ENCODE measurements at regions of chr3 and their contacts with region 1.

Region 1: DNA sequence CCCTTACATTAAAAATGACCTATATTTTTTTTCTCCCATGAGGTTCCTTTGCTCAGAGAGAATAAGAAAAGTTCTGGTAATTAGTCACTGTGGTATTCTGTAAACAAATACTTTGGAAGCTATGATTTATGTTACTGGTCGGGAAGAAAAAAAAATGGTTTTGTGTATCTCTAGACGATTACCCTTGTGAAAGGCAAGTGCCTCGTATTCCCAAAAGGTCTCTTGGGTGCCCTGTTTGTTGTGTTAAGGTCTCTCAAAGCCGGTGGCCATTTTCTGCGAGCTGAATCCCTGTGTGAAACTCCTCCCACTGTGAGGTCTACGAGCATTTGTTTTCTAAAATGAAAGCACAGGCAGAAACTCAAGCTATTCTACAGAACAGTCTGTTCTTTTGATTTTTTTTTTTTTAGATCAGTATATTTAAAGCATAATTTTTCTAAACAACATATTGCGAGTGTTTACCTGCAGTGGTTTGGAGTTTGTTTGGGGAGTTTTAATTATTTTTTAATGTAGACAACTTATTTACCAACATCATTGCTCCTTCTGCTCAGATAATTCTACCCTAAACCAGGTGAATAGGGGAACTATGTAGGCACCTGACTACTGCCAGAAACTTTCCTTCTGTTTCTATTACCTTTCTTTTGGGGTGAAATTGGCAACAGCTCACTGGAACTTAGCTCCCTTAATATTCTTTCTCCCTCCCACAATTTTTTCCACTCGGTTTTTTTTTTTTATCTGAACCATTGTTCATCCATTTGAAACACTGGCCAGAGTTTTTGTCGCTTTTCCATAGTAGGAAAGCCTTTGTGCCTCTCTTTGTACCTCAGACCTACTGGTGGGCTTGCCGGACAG is 44.0 kb downstream of the ZBTB38 start:
- DNase-seq: peak; percentile 66

Region 2: DNA sequence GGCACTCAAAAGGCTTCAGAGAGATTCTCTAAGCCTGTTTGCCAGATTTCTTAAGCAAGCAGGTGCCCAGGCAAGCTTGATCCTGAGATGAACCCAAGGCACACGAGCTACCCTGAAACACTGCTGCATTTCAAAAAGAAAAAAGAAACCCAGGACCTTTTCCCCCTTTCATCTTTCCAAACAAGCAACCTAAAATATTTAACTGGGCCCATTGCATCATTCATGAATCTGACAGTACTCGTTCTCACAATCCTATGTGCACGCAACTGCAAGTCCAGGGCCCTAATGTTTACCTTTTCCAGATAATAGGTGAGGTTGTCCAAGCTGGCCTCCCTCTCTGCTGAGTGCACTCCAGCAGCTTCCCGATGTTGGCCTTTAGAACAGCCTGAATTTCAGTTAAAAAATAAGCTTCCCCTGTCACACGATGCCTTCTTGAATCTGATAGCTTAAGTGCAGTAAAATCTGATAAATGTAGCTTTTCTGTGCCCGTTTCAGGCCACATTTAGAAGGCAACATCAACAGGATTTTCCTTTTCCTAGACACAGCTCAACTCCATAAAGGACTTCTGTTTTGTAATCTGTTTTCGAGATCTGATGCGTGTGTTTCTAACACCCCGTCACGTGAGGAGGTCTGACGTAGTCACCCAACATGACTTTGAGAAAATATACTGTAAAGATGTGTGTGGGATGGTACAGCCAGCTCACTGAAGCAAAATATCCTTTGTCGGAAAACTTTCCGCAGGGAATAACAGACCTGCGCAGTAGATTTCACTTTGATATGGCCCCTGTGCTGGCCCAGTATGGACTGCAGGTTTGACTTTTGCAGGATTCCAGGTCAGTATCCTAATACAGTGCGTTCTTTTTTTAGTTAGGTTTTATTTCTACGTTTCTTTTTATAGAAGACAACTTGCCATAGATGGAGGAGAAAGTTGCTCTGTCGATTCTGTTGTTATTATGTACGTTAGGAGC is 19.4 kb after region 1 on chr3:
- CTCF ChIA-PET with region 1: interaction called, 17 read pairs
- POLR2A ChIA-PET with region 1: interaction called, 4 read pairs
- DNase-seq: no peak

Measured in HEK293T (cell line).